GM18951 (cell line): ENCODE measurements at regions of chr1 and their contacts with region 1.

Region 1: GRCh38 chr1:41902125-41902524 is 16.6 kb downstream of the HIVEP3 start:
- POLR2A ChIP-seq: no peak

Region 2: GRCh38 chr1:42173155-42173933 is 271.2 kb after region 1 on chr1:
- in situ Hi-C with region 1: no loop called
- POLR2A ChIP-seq: peak; percentile 16

Region 3: GRCh38 chr1:42319128-42319851 is 417.2 kb after region 1 on chr1:
- in situ Hi-C with region 1: no loop called
- POLR2A ChIP-seq: no peak

Region 4: GRCh38 chr1:42747125-42747524 is 845.0 kb after region 1 on chr1:
- in situ Hi-C with region 1: loop called (anchors 10 kb)
- POLR2A ChIP-seq: no peak